Dendritic cell treated with granulocyte-macrophage colony-stimulating factor and Interleukin-4, amounts not matched to agents 40 ng/mL and 50 ng/mL, for 4 days (primary cell): ENCODE measurements at regions of chr1 and their contacts with region 1.

Region 1: GRCh38 chr1:239898062-239898730 is 193.5 kb upstream of the FMN2 start:
- H3K4me3 Mint-ChIP-seq: peak overlapping the region; percentile 25
- H3K27ac Mint-ChIP-seq: no peak overlapping the region
- H3K4me1 Mint-ChIP-seq: peaks cover 6% of the 10 kb centered on the region
- H3K27me3 Mint-ChIP-seq: no peaks in the 10 kb centered on the region

Region 2: GRCh38 chr1:238252033-238252802 is 1646.0 kb before region 1 on chr1:
- intact Hi-C with region 1: loop called (anchors 5 kb)
- H3K4me3 Mint-ChIP-seq: no peak overlapping the region
- H3K27ac Mint-ChIP-seq: no peak overlapping the region
- H3K4me1 Mint-ChIP-seq: peaks cover 15% of the 10 kb centered on the region
- H3K27me3 Mint-ChIP-seq: no peaks in the 10 kb centered on the region

Region 3: DNA sequence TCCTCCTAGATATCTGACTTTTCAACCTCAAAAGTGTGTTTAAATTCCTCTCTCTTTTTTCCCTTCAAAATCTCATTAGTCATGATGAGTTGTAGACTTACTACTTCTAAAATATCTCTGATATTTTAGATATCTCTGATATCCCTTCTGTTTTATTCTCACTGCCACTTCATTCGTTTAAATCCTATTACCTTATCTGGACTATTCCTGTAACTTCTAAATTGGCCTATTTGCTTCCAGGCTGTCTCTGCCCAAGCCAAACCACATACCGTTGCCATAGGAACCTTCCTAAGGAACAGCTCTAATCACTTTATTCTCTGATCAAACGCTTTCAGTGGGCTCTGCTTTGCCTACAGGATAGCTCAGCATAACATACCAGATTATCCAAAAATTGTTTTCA is 844.9 kb before region 1 on chr1:
- intact Hi-C with region 1: no loop called
- H3K4me3 Mint-ChIP-seq: no peak overlapping the region
- H3K27ac Mint-ChIP-seq: no peak overlapping the region
- H3K4me1 Mint-ChIP-seq: no peaks in the 10 kb centered on the region
- H3K27me3 Mint-ChIP-seq: no peaks in the 10 kb centered on the region

Region 4: GRCh38 chr1:239306426-239306825 is 591.8 kb before region 1 on chr1:
- intact Hi-C with region 1: loop called (anchors 2 kb)
- H3K4me3 Mint-ChIP-seq: no peak overlapping the region
- H3K27ac Mint-ChIP-seq: no peak overlapping the region
- H3K4me1 Mint-ChIP-seq: peaks cover 9% of the 10 kb centered on the region
- H3K27me3 Mint-ChIP-seq: no peaks in the 10 kb centered on the region

Region 5: DNA sequence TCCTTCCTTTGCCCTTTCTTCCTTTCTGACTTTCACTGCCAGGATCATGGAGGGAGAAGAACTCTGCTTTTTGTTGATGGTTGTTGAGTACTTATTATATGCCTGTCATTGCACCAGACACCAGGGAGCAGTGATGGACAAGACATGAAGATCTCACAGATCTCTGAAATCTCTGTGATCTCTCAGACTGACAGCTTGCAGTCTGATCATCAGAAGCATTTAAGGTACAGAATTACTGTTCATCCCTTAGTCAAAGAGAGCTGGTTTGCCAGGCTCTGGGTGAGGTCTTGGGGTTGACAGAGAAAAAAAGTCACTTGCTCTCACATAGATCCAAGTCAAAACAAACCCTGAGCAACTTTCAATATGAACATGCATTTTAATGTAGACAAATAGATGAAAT is 106.0 kb before region 1 on chr1:
- intact Hi-C with region 1: loop called (anchors 10 kb)
- H3K4me3 Mint-ChIP-seq: no peak overlapping the region
- H3K27ac Mint-ChIP-seq: no peak overlapping the region
- H3K4me1 Mint-ChIP-seq: no peaks in the 10 kb centered on the region
- H3K27me3 Mint-ChIP-seq: no peaks in the 10 kb centered on the region

Region 6: DNA sequence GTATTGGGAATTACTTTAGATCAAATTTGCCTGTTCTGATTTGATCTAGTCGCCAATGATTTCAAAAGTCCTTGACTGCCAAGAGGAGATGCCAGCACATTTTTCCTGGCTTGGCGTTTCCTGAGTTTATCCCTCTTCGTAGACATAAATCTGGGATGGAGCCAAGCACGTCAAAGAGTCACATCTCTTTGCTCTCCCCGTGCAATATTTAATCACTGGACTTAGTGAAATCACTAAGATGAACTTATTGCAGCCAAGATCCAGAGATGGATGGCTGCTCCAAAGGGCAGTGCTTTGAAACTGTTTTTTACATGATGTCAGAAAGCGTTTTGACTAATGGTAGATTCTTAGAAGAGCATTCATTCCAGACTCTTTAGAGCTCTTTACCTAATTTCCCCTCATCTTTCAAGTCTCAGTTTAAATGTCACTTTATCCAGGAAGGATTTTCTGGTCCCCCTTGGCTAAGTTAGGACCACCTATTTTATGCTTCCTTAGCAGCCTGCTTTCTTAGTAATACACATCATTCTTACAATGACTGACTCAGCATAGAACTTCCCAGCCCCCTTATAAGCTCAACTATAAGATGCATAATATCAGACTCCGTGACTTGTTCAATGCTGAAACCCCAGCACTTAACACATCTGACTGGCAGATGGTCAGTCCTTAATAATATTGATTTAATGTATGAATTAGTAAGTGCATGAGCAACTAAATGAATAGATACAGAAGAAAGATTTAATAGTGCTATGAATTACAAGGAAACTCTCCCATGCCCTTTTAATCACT is 808.1 kb after region 1 on chr1:
- intact Hi-C with region 1: no loop called
- H3K4me3 Mint-ChIP-seq: no peak overlapping the region
- H3K27ac Mint-ChIP-seq: no peak overlapping the region
- H3K4me1 Mint-ChIP-seq: no peaks in the 10 kb centered on the region
- H3K27me3 Mint-ChIP-seq: no peaks in the 10 kb centered on the region